GM12878 (cell line): ENCODE measurements at regions of chr12 and their contacts with region 1.

Region 1: DNA sequence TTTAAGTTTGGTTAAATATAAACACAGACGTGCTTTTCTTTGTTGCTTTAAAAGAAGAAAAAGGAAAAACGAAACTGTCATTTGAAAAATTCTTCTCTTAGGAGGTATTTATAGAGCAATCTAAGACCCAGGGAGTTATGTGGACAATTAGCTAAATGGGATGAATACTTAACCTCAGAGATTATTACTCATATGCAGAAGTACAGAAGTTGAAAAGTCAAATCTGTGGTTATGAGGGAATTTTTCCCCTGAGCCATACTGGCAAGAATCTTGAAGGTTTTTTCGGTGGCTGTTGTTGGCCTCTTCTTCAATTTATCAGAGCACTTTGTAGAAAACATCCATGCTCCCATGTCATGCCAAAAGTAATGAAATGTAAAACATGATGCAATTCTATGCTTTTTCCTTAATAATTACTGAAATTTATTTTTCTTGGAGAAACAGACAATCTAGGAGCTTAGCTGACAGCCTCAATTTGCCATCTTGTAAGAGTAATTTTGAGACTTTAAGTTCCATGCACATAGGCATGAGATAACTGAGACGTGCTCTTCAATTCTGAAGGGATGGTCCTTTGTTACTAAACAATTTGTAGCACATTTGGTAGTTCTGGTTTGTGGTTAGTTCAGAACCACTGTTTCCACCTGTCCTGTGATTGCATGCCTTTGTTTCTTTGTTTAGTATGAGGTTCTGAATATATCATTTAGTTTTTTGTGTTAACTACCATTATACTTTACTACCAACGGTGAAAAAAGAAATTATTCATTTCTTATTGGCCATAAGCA is 126.6 kb downstream of the BCAT1 start:
- DNase-seq: peak; percentile 66
- ATAC-seq: peak; percentile 85
- H3K4me3 ChIP-seq: peak overlapping the region; percentile 13; the same call in 1 of the 2 replicates
- H3K27ac ChIP-seq: peak overlapping the region; percentile 54
- H3K4me1 ChIP-seq: peaks cover 31% of the 10 kb centered on the region
- H3K27me3 ChIP-seq: no peaks in the 10 kb centered on the region
- CTCF ChIP-seq: no peak
- EP300 ChIP-seq: peak; percentile 76 to 84; a peak in 3 of 4 replicates
- POLR2A ChIP-seq: no peak
- RAD21 ChIP-seq: no peak

Region 2: DNA sequence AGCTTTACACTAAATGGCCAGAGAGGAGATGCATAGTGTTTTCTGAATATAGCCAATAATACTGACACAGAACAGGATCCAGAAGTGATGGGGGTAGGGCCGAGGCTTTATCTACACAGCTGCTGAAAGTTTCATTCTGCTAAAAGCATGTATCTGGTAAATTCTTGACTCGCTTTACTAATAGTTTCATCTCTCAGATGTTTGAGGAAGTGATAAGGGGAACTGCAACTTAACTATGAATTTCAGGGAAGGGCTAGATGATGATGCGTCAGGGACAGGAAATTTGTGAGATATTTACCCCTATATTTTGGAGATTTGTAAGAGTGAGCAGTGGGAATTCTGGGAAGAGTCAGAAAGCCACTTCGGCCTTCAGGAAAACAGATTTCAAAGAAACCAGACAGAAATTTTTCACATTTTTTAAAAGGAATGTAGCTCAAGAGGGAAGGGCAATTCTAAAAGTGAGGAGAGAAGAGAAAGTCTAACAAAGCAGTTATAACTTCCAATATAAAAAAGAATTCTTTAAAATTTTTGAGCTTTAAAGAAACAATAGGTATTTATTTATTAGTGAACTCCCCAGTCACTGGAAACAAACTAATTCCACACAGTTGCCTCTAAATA is 116.5 kb before region 1 on chr12:
- CTCF ChIA-PET with region 1: no interaction called
- POLR2A ChIA-PET with region 1: no interaction called
- RAD21 ChIA-PET with region 1: no interaction called
- SMC1A ChIA-PET with region 1: no interaction called
- in situ Hi-C with region 1: no loop called
- intact Hi-C with region 1: loop called (anchors 5 kb)
- DNase-seq: peak; percentile 80
- ATAC-seq: peak; percentile 99
- H3K4me3 ChIP-seq: no peak overlapping the region
- H3K27ac ChIP-seq: peak overlapping the region; percentile 33; the same call in 1 of the 2 replicates
- H3K4me1 ChIP-seq: peaks cover 16% of the 10 kb centered on the region; the same call in 1 of the 2 replicates
- H3K27me3 ChIP-seq: no peaks in the 10 kb centered on the region
- CTCF ChIP-seq: no peak
- EP300 ChIP-seq: peak; percentile 90 to 99
- POLR2A ChIP-seq: no peak
- RAD21 ChIP-seq: peak; percentile 26; the same call in 1 of the 2 replicates

Region 3: DNA sequence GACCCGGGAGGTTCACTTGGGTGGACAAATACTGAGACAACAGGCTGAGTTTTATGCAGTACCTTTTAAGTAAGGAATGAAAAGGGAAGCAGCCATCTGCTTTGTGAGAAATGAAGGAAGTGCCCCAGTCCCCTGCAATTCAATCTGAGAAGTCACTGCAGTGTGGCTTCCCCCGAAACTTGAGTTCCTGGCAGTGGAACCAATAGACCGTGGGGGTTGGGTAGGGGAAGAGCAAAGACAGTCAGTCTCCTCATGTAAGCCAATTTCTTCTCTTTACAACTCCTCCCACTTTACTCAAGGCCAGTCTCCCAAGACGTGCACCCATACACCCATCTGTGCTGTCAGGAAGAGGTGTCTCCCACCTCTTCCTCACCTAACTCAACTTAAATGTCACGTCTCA is 79.9 kb before region 1 on chr12:
- CTCF ChIA-PET with region 1: no interaction called
- POLR2A ChIA-PET with region 1: no interaction called
- RAD21 ChIA-PET with region 1: no interaction called
- SMC1A ChIA-PET with region 1: no interaction called
- in situ Hi-C with region 1: no loop called
- intact Hi-C with region 1: loop called (anchors 5 kb)
- DNase-seq: peak; percentile 45
- ATAC-seq: peak; percentile 83
- H3K4me3 ChIP-seq: no peak overlapping the region
- H3K27ac ChIP-seq: no peak overlapping the region
- H3K4me1 ChIP-seq: peaks cover 22% of the 10 kb centered on the region
- H3K27me3 ChIP-seq: no peaks in the 10 kb centered on the region; a peak in 1 of 4 replicates
- CTCF ChIP-seq: no peak
- EP300 ChIP-seq: no peak
- POLR2A ChIP-seq: no peak
- RAD21 ChIP-seq: no peak